Activated naive CD8-positive, alpha-beta T cell treated with anti-CD3 and anti-CD28 coated beads, Interleukin-2, amount 10 ng/mL, durations not matched to agents 7 days and 5 days (primary cell): ENCODE measurements at regions of chr3 and their contacts with region 1.

Region 1: DNA sequence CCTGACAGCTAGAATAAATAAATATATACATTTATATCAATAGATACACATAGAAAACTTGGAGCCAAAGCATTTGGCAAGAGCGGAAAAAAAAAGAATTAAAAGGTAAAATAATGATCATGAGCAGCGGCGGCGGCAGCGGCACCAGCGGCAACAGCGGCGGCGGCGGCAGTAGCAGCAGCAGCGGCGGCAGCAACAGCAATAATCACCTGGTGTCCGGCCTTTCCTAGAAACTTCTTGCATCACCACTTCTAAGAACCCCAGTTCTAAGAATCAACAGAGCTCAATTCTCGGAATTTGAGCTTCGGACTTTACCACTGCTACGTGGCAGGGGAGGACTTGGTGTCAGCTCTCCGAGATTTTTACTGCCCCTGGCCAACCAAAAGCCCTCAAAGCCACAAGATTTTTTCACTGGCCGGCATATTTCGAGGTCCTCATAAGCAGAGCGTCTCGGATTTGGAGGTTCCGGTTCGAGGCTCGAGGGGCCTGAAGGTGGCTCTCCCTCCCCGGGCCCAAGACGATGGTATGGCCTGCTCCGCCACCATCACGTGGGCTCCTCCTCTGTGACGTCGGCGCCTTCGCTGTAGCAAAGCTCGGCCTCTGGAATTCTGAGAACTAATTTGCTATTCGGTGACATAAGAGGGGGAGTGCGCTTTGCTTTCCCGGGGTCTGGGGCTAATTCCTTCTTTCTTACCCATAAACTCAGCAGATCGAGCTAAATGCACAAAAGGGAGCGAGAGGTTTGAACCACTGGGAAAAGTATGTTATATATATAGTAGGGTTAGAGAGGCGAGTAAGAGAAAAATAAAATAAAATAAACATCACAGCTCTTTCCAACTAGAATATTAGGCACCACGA is at the start of gene BCL6:
- DNase-seq: peak; percentile 90
- ATAC-seq: peak; percentile 38
- H3K4me3 Mint-ChIP-seq: peak within 1 kb of the TSS; percentile 99
- H3K27ac Mint-ChIP-seq: peak within 1 kb of the TSS; percentile 99
- H3K4me1 Mint-ChIP-seq: peaks cover 53% of the 10 kb centered on the region
- H3K27me3 Mint-ChIP-seq: no peaks in the 10 kb centered on the region
- total RNA-seq, gene BCL6: 32.1 to 34.0 TPM

Region 2: GRCh38 chr3:187112934-187113793 is 632.3 kb before region 1 on chr3:
- POLR2A ChIA-PET with region 1: no interaction called
- DNase-seq: no peak
- ATAC-seq: peak; percentile 22
- H3K4me3 Mint-ChIP-seq: peak overlapping the region; percentile 14
- H3K27ac Mint-ChIP-seq: no peak overlapping the region
- H3K4me1 Mint-ChIP-seq: peaks cover 6% of the 10 kb centered on the region
- H3K27me3 Mint-ChIP-seq: no peaks in the 10 kb centered on the region

Region 3: DNA sequence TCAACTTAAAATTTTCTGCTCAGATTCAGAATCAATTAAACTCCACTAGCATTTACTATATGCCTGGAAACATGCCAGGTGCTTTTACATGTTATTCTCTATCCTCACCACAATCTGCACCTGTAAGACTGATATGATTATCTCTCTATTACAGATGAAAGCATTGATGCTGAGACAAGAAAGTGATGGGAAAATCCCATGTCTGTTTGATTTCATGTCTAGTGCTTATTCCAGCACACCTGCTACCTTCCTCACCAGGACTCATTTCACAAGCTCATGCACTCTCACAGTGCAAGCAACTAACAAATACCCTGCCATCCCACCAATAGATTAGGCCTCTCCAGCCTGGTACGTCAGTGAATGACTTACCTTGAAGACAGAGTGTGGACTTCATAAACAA is 24.8 kb after region 1 on chr3:
- POLR2A ChIA-PET with region 1: no interaction called
- DNase-seq: no peak
- ATAC-seq: peak; percentile 26
- H3K4me3 Mint-ChIP-seq: no peak overlapping the region
- H3K27ac Mint-ChIP-seq: peak overlapping the region; percentile 18
- H3K4me1 Mint-ChIP-seq: peaks cover 32% of the 10 kb centered on the region
- H3K27me3 Mint-ChIP-seq: no peaks in the 10 kb centered on the region

Region 4: DNA sequence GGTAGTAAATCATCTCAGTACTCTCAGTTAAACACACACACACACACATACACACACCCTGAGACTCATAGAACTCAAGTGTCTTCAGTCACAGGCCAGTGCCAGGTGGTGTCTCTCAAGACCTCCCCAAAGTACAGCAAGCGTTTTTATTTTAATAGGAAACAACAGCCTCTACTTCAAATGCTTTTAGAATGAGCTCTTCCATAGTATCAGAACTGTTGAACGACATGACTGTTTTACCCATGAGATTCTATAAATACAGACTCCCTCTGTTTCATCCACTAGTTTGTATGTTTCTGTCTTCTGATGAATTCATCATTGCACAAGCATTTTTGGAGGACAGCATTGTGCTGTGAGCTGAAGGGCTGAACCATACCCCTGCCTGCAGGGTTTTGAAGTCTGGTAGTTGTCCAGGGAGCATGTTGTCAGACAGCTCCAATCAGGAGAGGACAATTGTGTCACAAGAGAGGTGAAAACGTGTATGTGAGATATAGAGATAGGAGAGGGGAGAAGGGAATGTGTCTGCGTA is 200.8 kb after region 1 on chr3:
- POLR2A ChIA-PET with region 1: interaction called, 24 read pairs
- DNase-seq: no peak
- ATAC-seq: no peak
- H3K4me3 Mint-ChIP-seq: no peak overlapping the region
- H3K27ac Mint-ChIP-seq: peak overlapping the region; percentile 11
- H3K4me1 Mint-ChIP-seq: peaks cover 24% of the 10 kb centered on the region
- H3K27me3 Mint-ChIP-seq: peaks cover 2% of the 10 kb centered on the region

Region 5: DNA sequence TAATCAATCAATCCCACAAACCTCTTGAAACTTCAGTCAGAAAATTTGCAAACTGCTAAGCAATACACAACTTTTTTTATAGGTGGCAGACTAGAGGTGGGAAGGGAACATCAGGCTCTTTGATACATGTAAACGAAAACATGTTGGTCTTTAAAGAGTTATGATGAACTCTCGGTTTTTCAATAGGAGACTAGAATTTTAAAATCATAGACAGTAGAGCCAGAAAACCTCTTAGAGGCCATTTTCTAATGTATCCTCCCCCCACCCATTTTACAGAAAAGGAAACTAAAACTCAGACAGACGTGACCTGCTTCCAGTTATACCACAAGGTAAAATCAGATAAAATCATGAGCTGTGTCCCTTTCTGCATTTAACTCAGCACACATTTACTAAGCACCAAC is 229.4 kb after region 1 on chr3:
- POLR2A ChIA-PET with region 1: interaction called, 71 read pairs
- DNase-seq: no peak
- ATAC-seq: peak; percentile 65
- H3K4me3 Mint-ChIP-seq: peak overlapping the region; percentile 76
- H3K27ac Mint-ChIP-seq: peak overlapping the region; percentile 94
- H3K4me1 Mint-ChIP-seq: peaks cover 62% of the 10 kb centered on the region
- H3K27me3 Mint-ChIP-seq: no peaks in the 10 kb centered on the region

Region 6: DNA sequence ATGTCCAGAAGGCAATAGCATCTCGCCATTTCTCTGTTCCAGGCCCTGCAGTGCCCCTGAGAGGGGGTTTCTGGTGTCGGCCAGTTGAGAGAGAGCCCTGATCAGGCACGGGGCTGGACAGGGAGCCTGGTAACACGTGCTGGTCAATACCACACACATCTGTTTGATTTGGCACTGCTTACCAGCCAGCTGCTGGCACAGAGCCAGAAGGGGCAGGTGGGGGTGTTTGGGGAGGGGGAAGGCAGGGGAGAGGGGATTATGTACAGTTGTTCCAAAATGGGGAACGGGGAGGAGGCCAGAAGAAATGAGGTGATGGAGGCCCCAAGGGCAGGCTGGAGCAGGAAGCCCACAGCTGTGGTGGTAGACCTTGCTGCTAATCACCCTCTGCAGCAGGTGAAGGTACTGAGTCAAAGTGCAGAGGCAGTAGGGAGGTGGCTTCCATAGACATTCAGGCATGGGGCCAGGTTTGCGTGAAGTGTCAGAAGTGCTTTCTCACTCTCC is 255.0 kb after region 1 on chr3:
- POLR2A ChIA-PET with region 1: interaction called, 57 read pairs
- DNase-seq: peak; percentile 59
- ATAC-seq: peak; percentile 53
- H3K4me3 Mint-ChIP-seq: peak overlapping the region; percentile 77
- H3K27ac Mint-ChIP-seq: peak overlapping the region; percentile 94
- H3K4me1 Mint-ChIP-seq: peaks cover 64% of the 10 kb centered on the region
- H3K27me3 Mint-ChIP-seq: no peaks in the 10 kb centered on the region

Region 7: DNA sequence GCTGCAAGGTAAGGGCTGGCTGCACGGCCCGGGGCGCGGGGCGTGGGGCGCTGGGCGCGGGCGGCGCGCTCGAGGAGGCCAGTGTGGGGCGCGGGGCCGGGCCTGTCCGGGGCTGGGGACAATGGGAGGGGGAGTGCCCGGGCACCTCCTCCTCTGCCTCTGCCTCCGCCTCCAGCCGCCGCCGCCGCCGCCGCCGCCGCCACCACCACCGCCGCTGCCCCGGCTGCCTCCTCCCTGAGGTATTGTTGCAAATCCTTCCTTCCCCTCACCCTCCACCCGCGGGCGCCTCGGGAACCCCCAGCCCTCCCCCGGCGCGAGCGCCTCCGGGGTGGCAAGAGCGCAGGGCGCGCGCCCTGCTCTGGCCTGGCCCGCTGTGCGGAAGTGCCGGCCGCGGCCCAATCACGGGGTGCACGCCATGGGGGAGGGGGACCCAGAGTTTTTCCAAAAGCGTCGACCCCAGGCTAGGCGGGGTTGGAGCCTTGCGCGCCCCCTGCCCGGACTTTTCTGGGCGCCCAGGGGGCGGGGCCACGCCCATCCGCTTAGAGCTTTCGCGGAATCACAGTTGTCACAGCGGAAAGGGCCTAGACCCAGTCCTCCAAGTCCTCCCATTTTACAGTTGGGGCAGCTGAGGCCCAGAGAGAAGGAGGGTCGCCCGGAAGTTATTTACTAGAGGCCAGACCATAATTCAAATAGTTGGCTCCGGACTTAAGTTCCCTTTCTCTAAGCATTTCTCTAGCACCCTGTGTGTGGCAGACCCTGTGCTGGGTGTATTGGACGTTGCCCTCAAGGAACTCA is 408.8 kb after region 1 on chr3 and contains the start of gene LPP:
- POLR2A ChIA-PET with region 1: interaction called, 134 read pairs
- DNase-seq: peak; percentile 91
- ATAC-seq: peak; percentile 84
- H3K4me3 Mint-ChIP-seq: peak within 1 kb of the TSS; percentile 92
- H3K27ac Mint-ChIP-seq: peak within 1 kb of the TSS; percentile 94
- H3K4me1 Mint-ChIP-seq: peaks cover 54% of the 10 kb centered on the region
- H3K27me3 Mint-ChIP-seq: no peaks in the 10 kb centered on the region
- total RNA-seq, gene LPP: 49.6 to 54.3 TPM